Caco-2 (cell line): ENCODE measurements at regions of chr12 and their contacts with region 1.

Region 1: GRCh38 chr12:105382771-105383622 is 52.5 kb downstream of the C12orf75 start:
- DNase-seq: peak in 1 of 2 experiments; percentile 57
- H3K4me3 ChIP-seq: no peak overlapping the region
- H3K4me3 Mint-ChIP-seq: no peak overlapping the region
- H3K27ac Mint-ChIP-seq: no peak overlapping the region
- H3K4me1 ChIP-seq: peaks cover 12% of the 10 kb centered on the region; the same call in 1 of the 2 replicates
- H3K4me1 Mint-ChIP-seq: no peaks in the 10 kb centered on the region
- H3K27me3 ChIP-seq: no peaks in the 10 kb centered on the region
- H3K27me3 Mint-ChIP-seq: no peaks in the 10 kb centered on the region
- CTCF ChIP-seq: peak; percentile 59 to 84

Region 2: DNA sequence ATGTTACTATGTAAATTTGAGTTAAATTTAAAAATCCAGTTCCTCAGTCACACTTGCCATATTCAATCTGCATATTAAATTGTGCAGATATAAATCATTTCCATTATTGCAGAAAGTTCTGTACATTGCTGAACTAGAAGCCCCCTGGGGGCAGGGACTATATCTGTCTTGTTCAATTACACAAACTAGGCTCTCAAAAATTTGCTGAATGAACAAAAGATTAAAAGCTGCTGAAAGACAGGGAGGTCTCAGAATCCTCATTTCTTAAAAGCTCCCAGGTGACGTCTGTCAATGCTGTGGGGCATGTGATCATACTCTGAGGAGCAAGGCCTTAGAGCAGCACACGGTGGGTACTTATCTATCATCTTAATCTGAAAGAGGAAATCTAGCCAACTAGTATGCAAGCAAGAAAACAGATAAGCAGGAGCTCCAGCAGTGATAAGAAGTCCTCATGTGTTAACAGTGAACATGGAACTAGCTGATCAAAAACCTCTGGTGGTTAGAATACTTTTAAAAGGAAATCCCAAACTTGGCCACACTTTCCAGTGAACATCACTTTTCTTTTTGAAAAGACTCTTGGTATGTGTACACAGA is 207.5 kb before region 1 on chr12:
- CTCF ChIA-PET with region 1: interaction called, 3 read pairs
- POLR2A ChIA-PET with region 1: no interaction called
- intact Hi-C with region 1: loop called (anchors 1 kb)
- DNase-seq: no peak
- H3K4me3 ChIP-seq: no peak overlapping the region
- H3K4me3 Mint-ChIP-seq: no peak overlapping the region
- H3K27ac Mint-ChIP-seq: no peak overlapping the region
- H3K4me1 ChIP-seq: no peaks in the 10 kb centered on the region
- H3K4me1 Mint-ChIP-seq: no peaks in the 10 kb centered on the region
- H3K27me3 ChIP-seq: no peaks in the 10 kb centered on the region
- H3K27me3 Mint-ChIP-seq: no peaks in the 10 kb centered on the region
- CTCF ChIP-seq: no peak

Region 3: DNA sequence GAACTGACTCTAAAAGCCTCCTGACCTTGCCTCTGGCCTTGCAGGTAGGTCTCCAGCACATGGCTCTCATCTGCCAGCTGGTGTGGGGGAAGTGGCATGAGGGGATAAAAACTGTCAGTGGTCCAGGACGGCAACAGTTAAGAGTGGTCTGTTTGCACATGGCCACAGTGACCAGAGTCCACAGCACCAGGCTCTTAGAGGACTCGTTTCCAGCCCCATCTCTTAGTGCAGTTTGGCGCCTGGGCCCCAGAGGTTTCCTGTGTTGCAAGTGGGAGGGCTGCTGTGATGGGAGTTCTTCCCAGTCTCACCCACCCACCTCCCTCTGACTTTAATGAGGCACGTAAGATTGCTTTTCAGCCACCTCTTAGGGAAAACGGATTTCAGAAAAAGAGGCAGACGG is 184.0 kb before region 1 on chr12:
- CTCF ChIA-PET with region 1: no interaction called
- POLR2A ChIA-PET with region 1: no interaction called
- intact Hi-C with region 1: loop called (anchors 5 kb)
- DNase-seq: no peak
- H3K4me3 ChIP-seq: no peak overlapping the region
- H3K4me3 Mint-ChIP-seq: no peak overlapping the region
- H3K27ac Mint-ChIP-seq: no peak overlapping the region
- H3K4me1 ChIP-seq: no peaks in the 10 kb centered on the region
- H3K4me1 Mint-ChIP-seq: no peaks in the 10 kb centered on the region
- H3K27me3 ChIP-seq: no peaks in the 10 kb centered on the region
- H3K27me3 Mint-ChIP-seq: no peaks in the 10 kb centered on the region
- CTCF ChIP-seq: no peak

Region 4: DNA sequence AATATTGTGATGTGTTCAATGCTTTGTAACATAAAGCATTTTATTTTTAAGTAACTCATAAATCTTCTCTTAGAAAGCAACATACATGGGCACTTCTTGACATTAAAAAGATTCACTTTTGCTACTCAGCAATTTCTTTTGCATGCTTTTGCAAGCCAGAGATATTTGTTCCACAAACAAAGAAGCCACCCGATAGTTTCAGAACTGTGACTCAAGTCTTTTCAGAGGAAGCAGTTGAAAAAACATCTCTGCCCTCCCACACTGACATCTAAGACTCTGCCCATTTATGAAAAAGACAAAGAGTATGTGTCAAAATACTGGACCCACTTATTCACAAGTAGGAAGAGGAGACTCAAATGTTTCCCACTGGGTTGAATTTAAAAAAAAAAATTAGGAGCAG is 154.5 kb before region 1 on chr12:
- CTCF ChIA-PET with region 1: no interaction called
- POLR2A ChIA-PET with region 1: no interaction called
- intact Hi-C with region 1: loop called (anchors 2 kb)
- DNase-seq: no peak
- H3K4me3 ChIP-seq: no peak overlapping the region
- H3K4me3 Mint-ChIP-seq: no peak overlapping the region
- H3K27ac Mint-ChIP-seq: peak overlapping the region; percentile 57
- H3K4me1 ChIP-seq: peaks cover 31% of the 10 kb centered on the region
- H3K4me1 Mint-ChIP-seq: peaks cover 27% of the 10 kb centered on the region
- H3K27me3 ChIP-seq: no peaks in the 10 kb centered on the region
- H3K27me3 Mint-ChIP-seq: no peaks in the 10 kb centered on the region
- CTCF ChIP-seq: no peak

Region 5: GRCh38 chr12:105279460-105280056 is 103.4 kb before region 1 on chr12:
- CTCF ChIA-PET with region 1: no interaction called
- POLR2A ChIA-PET with region 1: no interaction called
- intact Hi-C with region 1: loop called (anchors 5 kb)
- DNase-seq: no peak
- H3K4me3 ChIP-seq: no peak overlapping the region
- H3K4me3 Mint-ChIP-seq: no peak overlapping the region
- H3K27ac Mint-ChIP-seq: no peak overlapping the region
- H3K4me1 ChIP-seq: peaks cover 45% of the 10 kb centered on the region
- H3K4me1 Mint-ChIP-seq: peaks cover 30% of the 10 kb centered on the region
- H3K27me3 ChIP-seq: no peaks in the 10 kb centered on the region
- H3K27me3 Mint-ChIP-seq: no peaks in the 10 kb centered on the region
- CTCF ChIP-seq: peak; percentile 13 to 47

Region 6: DNA sequence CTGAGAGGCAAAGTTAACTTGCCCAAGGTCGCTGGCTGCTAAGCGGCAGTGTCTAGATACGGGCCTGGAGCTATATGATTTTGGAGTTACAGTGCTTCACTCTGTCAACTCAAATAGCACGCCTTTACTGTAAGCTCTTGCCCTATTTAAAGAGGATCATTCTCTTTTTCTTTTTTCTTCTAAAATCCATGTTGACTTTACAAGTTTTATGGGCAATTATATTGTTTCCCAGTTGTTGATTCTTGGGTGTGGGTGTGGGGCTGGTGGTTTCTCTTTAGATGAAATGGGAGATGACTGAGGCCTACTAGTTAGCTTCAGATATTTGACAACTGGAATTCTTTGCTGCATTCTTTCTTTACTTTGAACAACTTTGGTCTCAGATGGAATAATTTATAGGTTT is 18.2 kb after region 1 on chr12:
- CTCF ChIA-PET with region 1: no interaction called
- POLR2A ChIA-PET with region 1: no interaction called
- intact Hi-C with region 1: no loop called
- DNase-seq: peak in 1 of 2 experiments; percentile 17
- H3K4me3 ChIP-seq: no peak overlapping the region
- H3K4me3 Mint-ChIP-seq: no peak overlapping the region
- H3K27ac Mint-ChIP-seq: peak overlapping the region; percentile 57
- H3K4me1 ChIP-seq: no peaks in the 10 kb centered on the region
- H3K4me1 Mint-ChIP-seq: peaks cover 5% of the 10 kb centered on the region
- H3K27me3 ChIP-seq: no peaks in the 10 kb centered on the region
- H3K27me3 Mint-ChIP-seq: no peaks in the 10 kb centered on the region
- CTCF ChIP-seq: no peak